CD8-positive, alpha-beta T cell (primary cell): ENCODE measurements at regions of chr1 and their contacts with region 1.

Region 1: GRCh38 chr1:110203021-110203661 is 7.0 kb upstream of the KCNC4 start:
- DNase-seq: peak; percentile 43 to 86 (median 68)
- ATAC-seq: peak; percentile 80
- H3K4me3 ChIP-seq: no peak overlapping the region
- H3K4me3 Mint-ChIP-seq: no peak overlapping the region
- H3K27ac ChIP-seq: peak overlapping the region in 1 of 2 experiments; percentile 64
- H3K27ac Mint-ChIP-seq: peak overlapping the region; percentile 90
- H3K4me1 ChIP-seq: peaks cover 22% of the 10 kb centered on the region
- H3K4me1 Mint-ChIP-seq: peaks cover 25% of the 10 kb centered on the region
- H3K27me3 ChIP-seq: no peaks in the 10 kb centered on the region
- H3K27me3 Mint-ChIP-seq: no peaks in the 10 kb centered on the region
- CTCF ChIP-seq: peak; percentile 82

Region 2: DNA sequence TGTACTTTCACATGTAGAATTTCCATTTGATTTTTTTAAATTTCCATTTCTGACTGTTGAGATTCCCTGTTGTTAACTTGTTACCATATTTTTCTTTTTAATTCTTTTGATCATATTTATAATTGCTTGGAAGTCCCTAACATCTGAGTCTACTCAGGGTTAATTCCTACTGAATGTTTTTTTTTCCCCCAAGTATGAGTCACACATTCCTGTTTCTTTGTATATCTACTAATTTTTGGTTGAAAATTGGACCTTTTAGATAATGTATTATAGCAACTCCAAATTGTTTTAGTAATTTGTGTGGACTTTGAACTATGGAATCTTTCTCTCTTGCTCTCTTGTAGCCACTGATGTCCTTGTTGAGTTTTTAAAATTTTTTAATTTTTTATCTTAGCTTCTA is 1402.0 kb before region 1 on chr1:
- CTCF ChIA-PET with region 1: no interaction called
- POLR2A ChIA-PET with region 1: no interaction called
- intact Hi-C with region 1: no loop called
- DNase-seq: no peak
- ATAC-seq: no peak
- H3K4me3 ChIP-seq: no peak overlapping the region
- H3K4me3 Mint-ChIP-seq: no peak overlapping the region
- H3K27ac ChIP-seq: no peak overlapping the region
- H3K27ac Mint-ChIP-seq: peak overlapping the region; percentile 60
- H3K4me1 ChIP-seq: no peaks in the 10 kb centered on the region
- H3K4me1 Mint-ChIP-seq: no peaks in the 10 kb centered on the region
- H3K27me3 ChIP-seq: no peaks in the 10 kb centered on the region
- H3K27me3 Mint-ChIP-seq: no peaks in the 10 kb centered on the region
- CTCF ChIP-seq: no peak

Region 3: DNA sequence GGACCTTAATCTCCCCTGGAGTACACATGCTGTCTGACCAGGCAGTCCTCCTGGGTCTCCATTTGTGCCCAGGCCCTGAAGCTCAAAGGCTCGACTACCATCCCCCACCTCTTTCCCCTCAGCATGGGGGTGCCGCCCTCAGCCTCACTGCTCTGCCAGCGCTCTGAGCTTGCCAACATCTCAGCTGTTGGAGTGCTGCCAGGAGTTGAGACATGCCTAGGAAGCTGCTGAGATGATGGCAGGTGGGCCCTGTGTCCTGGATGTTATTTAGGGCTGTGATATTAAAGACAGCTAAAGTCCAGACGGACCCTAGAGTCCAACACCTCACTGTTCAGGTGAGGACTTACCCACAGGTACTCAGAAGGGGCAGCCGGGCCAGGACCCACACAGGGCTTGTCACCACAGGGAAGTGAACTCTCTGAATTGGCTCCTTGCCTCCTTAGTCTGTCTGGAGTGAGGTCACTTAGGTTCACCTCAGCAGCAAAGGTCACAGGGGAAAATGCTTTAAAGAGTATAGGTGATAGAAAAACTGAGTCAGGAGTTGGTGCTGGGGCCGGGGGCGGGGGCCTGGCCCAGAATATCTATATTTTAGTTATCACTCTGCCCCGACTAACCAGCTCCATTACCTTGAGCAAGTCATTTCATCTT is 12.7 kb before region 1 on chr1:
- CTCF ChIA-PET with region 1: interaction called, 11 read pairs
- POLR2A ChIA-PET with region 1: no interaction called
- intact Hi-C with region 1: no loop called
- DNase-seq: no peak
- ATAC-seq: no peak
- H3K4me3 ChIP-seq: no peak overlapping the region
- H3K4me3 Mint-ChIP-seq: no peak overlapping the region
- H3K27ac ChIP-seq: no peak overlapping the region
- H3K27ac Mint-ChIP-seq: no peak overlapping the region
- H3K4me1 ChIP-seq: no peaks in the 10 kb centered on the region
- H3K4me1 Mint-ChIP-seq: no peaks in the 10 kb centered on the region
- H3K27me3 ChIP-seq: no peaks in the 10 kb centered on the region
- H3K27me3 Mint-ChIP-seq: peaks cover 10% of the 10 kb centered on the region
- CTCF ChIP-seq: no peak

Region 4: DNA sequence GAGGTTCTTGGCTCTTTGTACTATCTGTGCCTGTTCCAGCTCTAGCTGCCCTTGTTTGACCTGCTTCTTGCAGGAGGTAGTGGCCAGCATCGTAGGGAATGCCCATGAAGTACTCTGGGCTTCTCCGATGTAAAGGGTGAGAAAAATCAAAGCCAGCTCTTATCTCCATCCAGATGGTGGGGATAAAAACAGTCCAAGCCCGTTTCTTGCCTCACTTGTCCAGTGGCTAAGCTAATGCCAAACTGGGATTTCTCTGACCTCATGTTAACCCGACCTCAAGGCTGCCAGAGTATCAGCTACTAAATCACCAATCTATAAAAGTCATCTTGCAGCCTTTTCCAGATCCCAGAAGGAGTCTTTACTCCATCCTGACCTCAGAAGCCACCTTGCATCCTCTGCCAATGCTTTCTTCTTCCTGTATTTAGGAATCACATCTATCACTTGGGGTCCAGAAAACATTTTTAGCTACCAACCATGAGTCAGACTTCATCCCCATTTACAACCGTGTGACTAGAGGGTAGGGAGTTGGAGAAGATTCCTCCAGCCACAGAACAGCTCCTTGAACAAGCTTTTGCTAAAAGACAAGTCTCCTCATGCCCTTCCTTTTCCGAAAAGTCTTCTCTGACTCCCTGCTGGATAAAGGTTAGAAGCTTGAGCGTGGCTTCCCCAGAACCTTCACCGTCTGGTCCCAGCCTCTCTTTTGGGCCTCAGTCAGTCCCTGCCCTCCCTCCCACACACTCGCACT is 42.9 kb after region 1 on chr1:
- CTCF ChIA-PET with region 1: interaction called, 10 read pairs
- POLR2A ChIA-PET with region 1: no interaction called
- intact Hi-C with region 1: no loop called
- DNase-seq: no peak
- ATAC-seq: no peak
- H3K4me3 ChIP-seq: no peak overlapping the region
- H3K4me3 Mint-ChIP-seq: no peak overlapping the region
- H3K27ac ChIP-seq: no peak overlapping the region
- H3K27ac Mint-ChIP-seq: no peak overlapping the region
- H3K4me1 ChIP-seq: no peaks in the 10 kb centered on the region
- H3K4me1 Mint-ChIP-seq: no peaks in the 10 kb centered on the region
- H3K27me3 ChIP-seq: no peaks in the 10 kb centered on the region
- H3K27me3 Mint-ChIP-seq: no peaks in the 10 kb centered on the region
- CTCF ChIP-seq: no peak

Region 5: GRCh38 chr1:110312188-110313121 is 109.3 kb after region 1 on chr1:
- CTCF ChIA-PET with region 1: interaction called, 783 read pairs
- POLR2A ChIA-PET with region 1: interaction called, 12 read pairs
- intact Hi-C with region 1: loop called (anchors 1 kb)
- DNase-seq: peak; percentile 49 to 85 (median 77)
- ATAC-seq: peak; percentile 99
- H3K4me3 ChIP-seq: no peak overlapping the region
- H3K4me3 Mint-ChIP-seq: no peak overlapping the region
- H3K27ac ChIP-seq: no peak overlapping the region
- H3K27ac Mint-ChIP-seq: no peak overlapping the region
- H3K4me1 ChIP-seq: peaks cover 2% of the 10 kb centered on the region
- H3K4me1 Mint-ChIP-seq: peaks cover 3% of the 10 kb centered on the region
- H3K27me3 ChIP-seq: no peaks in the 10 kb centered on the region
- H3K27me3 Mint-ChIP-seq: no peaks in the 10 kb centered on the region
- CTCF ChIP-seq: peak; percentile 87

Region 6: GRCh38 chr1:110407260-110408210 is 204.4 kb after region 1 on chr1 and contains the start of gene LAMTOR5:
- CTCF ChIA-PET with region 1: interaction called, 10 read pairs
- POLR2A ChIA-PET with region 1: interaction called, 3 read pairs
- intact Hi-C with region 1: loop called in 1 of 2 experiments (anchors 1 kb)
- DNase-seq: peak; percentile 83 to 95 (median 89)
- ATAC-seq: peak; percentile 93
- H3K4me3 ChIP-seq: peak within 1 kb of the TSS; percentile 92 to 99
- H3K4me3 Mint-ChIP-seq: peak within 1 kb of the TSS; percentile 99
- H3K27ac ChIP-seq: peak within 1 kb of the TSS; percentile 91 to 92
- H3K27ac Mint-ChIP-seq: peak within 1 kb of the TSS; percentile 99
- H3K4me1 ChIP-seq: peaks cover 23% of the 10 kb centered on the region
- H3K4me1 Mint-ChIP-seq: peaks cover 29% of the 10 kb centered on the region
- H3K27me3 ChIP-seq: no peaks in the 10 kb centered on the region
- H3K27me3 Mint-ChIP-seq: no peaks in the 10 kb centered on the region
- CTCF ChIP-seq: no peak
- total RNA-seq, gene LAMTOR5: 106 to 109 TPM

Region 7: GRCh38 chr1:110495926-110496600 is 292.9 kb after region 1 on chr1:
- CTCF ChIA-PET with region 1: interaction called, 57 read pairs
- POLR2A ChIA-PET with region 1: no interaction called
- intact Hi-C with region 1: loop called (anchors 1 kb)
- DNase-seq: peak; percentile 58 to 82 (median 77)
- ATAC-seq: peak; percentile 80
- H3K4me3 ChIP-seq: no peak overlapping the region
- H3K4me3 Mint-ChIP-seq: no peak overlapping the region
- H3K27ac ChIP-seq: no peak overlapping the region
- H3K27ac Mint-ChIP-seq: no peak overlapping the region
- H3K4me1 ChIP-seq: no peaks in the 10 kb centered on the region
- H3K4me1 Mint-ChIP-seq: no peaks in the 10 kb centered on the region
- H3K27me3 ChIP-seq: no peaks in the 10 kb centered on the region
- H3K27me3 Mint-ChIP-seq: no peaks in the 10 kb centered on the region
- CTCF ChIP-seq: peak; percentile 78